Lower leg skin (tissue), 4 donors: ENCODE measurements at regions of chr4 and their contacts with region 1.

Region 1: GRCh38 chr4:144614850-144615585 is 30.9 kb upstream of the HHIP start:
- DNase-seq: no peak
- H3K4me3 ChIP-seq: no peak overlapping the region
- CTCF ChIP-seq: no peak
- POLR2A ChIP-seq: no peak

Region 2: DNA sequence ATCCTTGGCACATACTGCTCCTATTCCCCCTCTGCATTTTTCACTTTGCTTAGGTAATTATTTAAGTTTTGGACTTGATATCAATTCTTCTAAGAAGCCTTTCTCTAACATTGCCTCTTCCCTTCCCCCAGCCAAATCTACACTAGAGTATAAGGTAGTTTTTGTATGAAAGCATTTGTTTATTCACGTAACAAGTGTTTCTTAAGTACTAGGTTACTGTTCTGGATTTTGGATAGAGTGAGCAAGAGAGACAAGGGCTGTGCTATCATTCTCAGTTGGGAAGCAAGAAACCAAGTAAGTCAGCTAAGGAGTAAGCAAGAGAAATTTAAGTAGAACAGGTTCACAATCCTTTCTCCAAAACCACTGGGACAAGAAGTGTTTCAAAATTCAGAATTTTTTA is 25.0 kb before region 1 on chr4:
- intact Hi-C with region 1: loop called (anchors 1 kb)
- DNase-seq: no peak
- H3K4me3 ChIP-seq: no peak overlapping the region
- CTCF ChIP-seq: no peak
- POLR2A ChIP-seq: no peak

Region 3: DNA sequence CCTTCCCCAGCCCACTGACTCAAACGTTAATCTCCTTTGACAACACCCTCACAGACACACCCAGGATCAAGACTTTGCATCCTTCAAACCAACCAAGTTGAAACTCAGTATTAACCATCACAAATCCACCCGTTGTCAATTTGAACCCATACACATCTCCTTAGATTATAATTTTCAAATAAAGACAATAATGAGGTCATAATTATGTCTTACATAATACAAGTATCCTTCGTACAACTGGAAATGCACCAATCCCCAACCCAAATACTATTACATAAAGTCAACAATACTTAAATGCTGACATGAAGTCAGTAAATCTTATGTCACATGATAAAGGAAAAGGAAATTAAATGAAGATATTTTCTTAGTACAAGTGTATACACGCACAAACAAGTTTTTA is 300.8 kb after region 1 on chr4:
- intact Hi-C with region 1: no loop called
- DNase-seq: no peak
- H3K4me3 ChIP-seq: no peak overlapping the region
- CTCF ChIP-seq: no peak
- POLR2A ChIP-seq: no peak